Mammary epithelial cell (primary cell): ENCODE measurements at regions of chr3 and their contacts with region 1.

Region 1: GRCh38 chr3:180329847-180330246 is 272.1 kb upstream of the TTC14 start:
- DNase-seq: no peak
- H3K4me3 ChIP-seq: no peak overlapping the region
- H3K27ac ChIP-seq: no peak overlapping the region
- H3K4me1 ChIP-seq: no peaks in the 10 kb centered on the region
- H3K27me3 ChIP-seq: no peaks in the 10 kb centered on the region
- CTCF ChIP-seq: no peak

Region 2: DNA sequence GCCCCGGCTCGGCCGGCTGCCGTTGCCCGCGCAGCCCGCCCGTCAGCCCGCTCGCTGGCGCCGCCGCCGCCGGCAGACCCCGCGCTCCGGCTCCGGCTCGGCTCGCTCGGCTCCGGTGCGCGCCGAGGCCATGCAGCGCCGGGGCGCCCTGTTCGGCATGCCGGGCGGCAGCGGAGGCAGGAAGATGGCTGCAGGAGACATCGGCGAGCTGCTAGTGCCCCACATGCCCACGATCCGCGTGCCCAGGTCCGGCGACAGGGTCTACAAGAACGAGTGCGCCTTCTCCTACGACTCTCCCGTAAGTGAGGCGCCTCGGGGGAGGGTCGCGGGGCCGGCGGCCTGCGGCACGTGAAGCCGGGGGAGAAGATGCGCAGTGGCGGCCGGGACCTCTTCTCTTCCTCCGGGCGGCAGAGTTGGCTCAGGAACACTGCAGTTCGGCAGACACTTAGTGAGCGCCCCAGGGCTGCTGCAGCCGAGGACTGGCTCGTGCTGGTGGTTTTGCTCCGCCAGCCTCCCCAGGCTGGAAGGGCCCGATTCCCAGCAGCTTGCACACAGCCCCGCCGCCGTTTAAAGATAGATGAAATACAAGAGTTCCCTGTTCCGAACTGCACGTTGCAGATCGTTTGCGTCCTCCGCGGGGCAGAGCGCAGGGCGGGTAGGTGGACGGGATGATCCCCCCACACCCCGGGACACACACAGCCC is 676.6 kb before region 1 on chr3:
- CTCF ChIA-PET with region 1: interaction called, 11 read pairs
- dilution Hi-C with region 1: no loop called
- in situ Hi-C with region 1: no loop called
- intact Hi-C with region 1: no loop called
- DNase-seq: peak; percentile 82
- H3K4me3 ChIP-seq: peak overlapping the region; percentile 53 to 88 (median 68)
- H3K27ac ChIP-seq: peak overlapping the region; percentile 12
- H3K4me1 ChIP-seq: peaks cover 6% of the 10 kb centered on the region
- H3K27me3 ChIP-seq: no peaks in the 10 kb centered on the region
- CTCF ChIP-seq: peak in 1 of 2 donors; percentile 12

Region 3: GRCh38 chr3:179882292-179882691 is 447.6 kb before region 1 on chr3:
- CTCF ChIA-PET with region 1: no interaction called
- dilution Hi-C with region 1: no loop called
- in situ Hi-C with region 1: no loop called
- intact Hi-C with region 1: no loop called
- DNase-seq: peak; percentile 2
- H3K4me3 ChIP-seq: no peak overlapping the region
- H3K27ac ChIP-seq: no peak overlapping the region
- H3K4me1 ChIP-seq: no peaks in the 10 kb centered on the region
- H3K27me3 ChIP-seq: no peaks in the 10 kb centered on the region
- CTCF ChIP-seq: no peak

Region 4: DNA sequence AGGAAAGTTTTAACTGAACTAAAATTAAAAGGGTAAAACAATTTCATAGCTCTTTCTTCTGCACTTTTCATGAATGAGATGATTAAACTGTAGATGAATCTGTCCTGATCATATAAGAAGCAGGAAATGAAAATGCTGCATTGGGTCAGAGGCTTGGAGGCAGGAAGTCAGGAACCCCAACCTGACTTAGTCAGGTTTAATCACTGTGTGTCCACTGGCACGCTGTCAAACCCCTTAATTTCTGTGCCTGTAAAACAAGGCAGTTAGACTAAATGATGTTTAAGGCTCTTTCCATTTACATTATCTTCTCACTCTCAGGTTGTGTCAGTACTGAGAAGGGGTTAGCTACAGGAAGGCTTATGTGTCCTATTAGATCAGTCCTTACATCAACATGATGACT is 78.8 kb after region 1 on chr3:
- CTCF ChIA-PET with region 1: no interaction called
- dilution Hi-C with region 1: no loop called
- in situ Hi-C with region 1: no loop called
- intact Hi-C with region 1: no loop called
- DNase-seq: peak; percentile 87
- H3K4me3 ChIP-seq: no peak overlapping the region
- H3K27ac ChIP-seq: peak overlapping the region; percentile 59
- H3K4me1 ChIP-seq: peaks cover 38% of the 10 kb centered on the region
- H3K27me3 ChIP-seq: no peaks in the 10 kb centered on the region
- CTCF ChIP-seq: no peak

Region 5: GRCh38 chr3:180707896-180708295 is 378.0 kb after region 1 on chr3:
- CTCF ChIA-PET with region 1: no interaction called
- dilution Hi-C with region 1: no loop called
- in situ Hi-C with region 1: no loop called
- intact Hi-C with region 1: no loop called
- DNase-seq: no peak
- H3K4me3 ChIP-seq: no peak overlapping the region
- H3K27ac ChIP-seq: no peak overlapping the region
- H3K4me1 ChIP-seq: no peaks in the 10 kb centered on the region
- H3K27me3 ChIP-seq: peaks cover 7% of the 10 kb centered on the region
- CTCF ChIP-seq: no peak